Activated CD4-positive, alpha-beta memory T cell treated with anti-CD3 and anti-CD28 coated beads for 36 hours (primary cell): ENCODE measurements at regions of chr1 and their contacts with region 1.

Region 1: GRCh38 chr1:201506556-201507359 is at the start of gene CSRP1:
- DNase-seq: peak; percentile 89
- H3K4me3 Mint-ChIP-seq: peak within 1 kb of the TSS; percentile 91
- H3K27ac Mint-ChIP-seq: peak within 1 kb of the TSS; percentile 83
- H3K4me1 Mint-ChIP-seq: peaks cover 37% of the 10 kb centered on the region
- H3K27me3 Mint-ChIP-seq: no peaks in the 10 kb centered on the region
- total RNA-seq, gene CSRP1: 48.4 to 51.8 TPM

Region 2: DNA sequence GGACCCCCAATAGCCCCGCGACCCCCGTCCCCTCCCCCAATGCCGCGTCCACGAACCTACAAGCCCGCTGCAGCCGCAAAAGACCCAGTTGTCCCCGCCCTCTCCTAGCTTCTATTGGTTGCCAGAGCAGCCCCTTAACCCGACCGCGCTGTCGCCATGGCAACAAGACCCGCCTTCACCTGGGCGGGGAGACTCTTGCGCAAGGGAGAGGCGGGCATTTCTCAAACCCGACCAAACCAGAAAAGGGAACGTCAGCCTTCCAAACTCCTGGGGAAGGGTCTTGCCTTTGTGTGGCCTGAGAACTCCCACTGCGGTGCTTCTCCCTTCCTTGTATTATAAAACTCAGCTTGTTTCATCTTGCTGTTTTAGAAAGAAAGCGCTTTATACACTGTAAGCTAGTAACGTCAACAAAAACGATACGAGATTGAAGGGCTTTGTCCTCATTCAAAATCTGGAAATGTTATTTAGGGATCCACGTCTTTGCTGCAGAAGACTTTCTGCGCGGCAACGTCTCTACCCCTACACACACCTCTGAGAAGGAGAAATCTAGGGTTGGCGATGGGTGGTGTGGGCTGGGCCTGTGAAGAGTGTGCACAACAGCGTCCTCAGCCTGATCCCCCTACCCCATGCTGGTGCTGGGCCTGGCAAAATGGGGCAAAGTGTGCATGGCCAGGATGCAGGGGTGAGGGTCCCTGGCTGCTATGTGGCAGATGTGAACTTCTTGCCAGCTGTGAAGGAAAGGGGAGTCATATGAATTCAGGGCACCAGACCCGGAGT is 352.2 kb before region 1 on chr1 and contains the start of gene TMEM9:
- CTCF ChIA-PET with region 1: no interaction called
- POLR2A ChIA-PET with region 1: no interaction called
- intact Hi-C with region 1: loop called (anchors 2 kb)
- DNase-seq: peak; percentile 98
- H3K4me3 Mint-ChIP-seq: peak within 1 kb of the TSS; percentile 80
- H3K27ac Mint-ChIP-seq: peak within 1 kb of the TSS; percentile 71
- H3K4me1 Mint-ChIP-seq: peaks cover 20% of the 10 kb centered on the region
- H3K27me3 Mint-ChIP-seq: peaks cover 13% of the 10 kb centered on the region
- total RNA-seq, gene TMEM9: 21.7 to 22.5 TPM

Region 3: GRCh38 chr1:201456499-201457309 is 50.1 kb before region 1 on chr1:
- CTCF ChIA-PET with region 1: interaction called, 16 read pairs
- POLR2A ChIA-PET with region 1: no interaction called
- intact Hi-C with region 1: loop called (anchors 1 kb)
- DNase-seq: no peak
- H3K4me3 Mint-ChIP-seq: no peak overlapping the region
- H3K27ac Mint-ChIP-seq: no peak overlapping the region
- H3K4me1 Mint-ChIP-seq: peaks cover 10% of the 10 kb centered on the region
- H3K27me3 Mint-ChIP-seq: peaks cover 8% of the 10 kb centered on the region